Heart left ventricle (tissue), 16 donors: ENCODE measurements at regions of chr5 and their contacts with region 1.

Region 1: DNA sequence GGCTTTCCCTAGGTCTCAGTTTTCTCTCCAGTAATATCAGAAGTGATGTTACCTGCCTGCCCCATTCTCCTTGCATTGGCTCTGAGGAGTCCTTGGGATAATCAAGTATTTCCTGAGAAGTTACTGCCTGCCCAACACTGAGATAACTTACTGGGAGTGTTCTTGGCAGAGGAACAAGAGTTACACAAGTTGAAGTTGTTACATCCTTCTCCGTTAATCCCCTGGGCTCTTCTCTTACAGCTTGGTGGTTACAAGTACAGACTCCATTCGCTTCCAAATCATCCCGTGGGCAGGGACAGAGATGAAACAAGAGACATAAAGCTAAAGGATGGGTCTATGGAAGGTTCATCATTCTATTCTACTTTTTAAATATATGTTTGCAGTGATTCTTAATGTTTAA is 74.1 kb upstream of the SAP30L start:
- DNase-seq: peak in 1 of 5 donors; percentile 25
- ATAC-seq: peak; percentile 10 to 77 (median 72)
- H3K4me3 ChIP-seq: no peak overlapping the region
- H3K27ac ChIP-seq: peak overlapping the region in 5 of 12 donors; percentile 49 to 68 (median 61)
- H3K4me1 ChIP-seq: peaks cover 0 to 61% (median 38%) of the 10 kb centered on the region in 12 donors
- H3K27me3 ChIP-seq: no peaks in the 10 kb centered on the region
- CTCF ChIP-seq: no peak
- POLR2A ChIP-seq: no peak

Region 2: DNA sequence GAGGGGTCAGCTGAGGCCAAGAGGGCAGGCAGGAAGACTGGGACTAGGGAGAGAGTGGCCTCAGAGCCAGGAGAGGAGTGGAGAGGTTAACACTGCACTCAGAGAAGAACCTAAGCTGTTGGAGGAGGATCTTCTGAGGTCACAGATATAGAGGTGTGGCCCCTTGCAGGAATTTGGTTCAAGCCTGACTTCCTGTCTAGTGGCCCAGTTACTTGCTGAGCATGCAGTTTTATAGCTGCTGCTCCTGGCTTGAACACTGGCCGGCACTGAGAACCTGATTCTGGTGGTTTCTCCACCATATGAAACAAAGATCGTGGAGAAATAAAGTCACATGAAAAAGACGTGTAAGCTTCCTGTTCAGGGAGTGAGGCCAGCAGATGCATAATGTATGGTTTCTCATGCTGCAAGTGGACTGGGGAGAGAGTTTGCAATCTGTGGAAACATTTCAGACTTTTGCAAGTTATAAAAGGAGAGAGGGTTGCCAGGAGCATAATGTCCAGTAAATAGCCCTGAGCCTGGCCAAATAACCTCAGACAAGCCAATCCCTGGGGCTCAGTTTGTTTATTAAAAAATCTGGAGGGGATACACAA is 98.6 kb before region 1 on chr5:
- intact Hi-C with region 1: loop called in 1 of 10 experiments (anchors 10 kb)
- DNase-seq: peak in 3 of 5 donors; percentile 29 to 55 (median 29)
- ATAC-seq: peak; percentile 66 to 78 (median 68)
- H3K4me3 ChIP-seq: no peak overlapping the region
- H3K27ac ChIP-seq: peak overlapping the region in 9 of 12 donors; percentile 7 to 74 (median 35)
- H3K4me1 ChIP-seq: peaks cover 0 to 63% (median 15%) of the 10 kb centered on the region in 12 donors
- H3K27me3 ChIP-seq: no peaks in the 10 kb centered on the region
- CTCF ChIP-seq: no peak
- POLR2A ChIP-seq: peak in 1 of 2 donors; percentile 10